ENCODE measurements at regions of chrX and their contacts with region 1.

Region 1: GRCh38 chrX:30504309-30504708 is 73.3 kb downstream of the TASL start:
- DNase-seq: peak in 1 of 2 experiments; percentile 52
- H3K4me3 ChIP-seq: no peak overlapping the region
- H3K4me1 ChIP-seq: peaks cover 5% of the 10 kb centered on the region
- H3K27me3 ChIP-seq: peaks cover 9% of the 10 kb centered on the region; the same call in 1 of the 2 replicates

Region 2: GRCh38 chrX:30141966-30142365 is 362.3 kb before region 1 on chrX:
- in situ Hi-C with region 1: loop called (anchors 10 kb)
- DNase-seq: peak; percentile 71 to 79
- H3K4me3 ChIP-seq: no peak overlapping the region
- H3K4me1 ChIP-seq: peaks cover 9% of the 10 kb centered on the region
- H3K27me3 ChIP-seq: no peaks in the 10 kb centered on the region

Region 3: GRCh38 chrX:30241724-30242415 is 262.4 kb before region 1 on chrX and contains the start of gene MAGEB4:
- in situ Hi-C with region 1: no loop called
- DNase-seq: no peak
- H3K4me3 ChIP-seq: no peak within 1 kb of the TSS
- H3K4me1 ChIP-seq: no peaks in the 10 kb centered on the region
- H3K27me3 ChIP-seq: no peaks in the 10 kb centered on the region

Region 4: GRCh38 chrX:30275498-30275897 is 228.8 kb before region 1 on chrX:
- in situ Hi-C with region 1: loop called (anchors 10 kb)
- DNase-seq: peak in 1 of 2 experiments; percentile 19
- H3K4me3 ChIP-seq: no peak overlapping the region
- H3K4me1 ChIP-seq: no peaks in the 10 kb centered on the region
- H3K27me3 ChIP-seq: no peaks in the 10 kb centered on the region

Measured in HAP-1 (cell line).